SK-N-SH (cell line): ENCODE measurements at regions of chr17 and their contacts with region 1.

Region 1: GRCh38 chr17:46940621-46941404 is 17.9 kb downstream of the GOSR2 start:
- DNase-seq: peak; percentile 91
- H3K4me3 ChIP-seq: no peak overlapping the region
- H3K27ac ChIP-seq: peak overlapping the region; percentile 19 to 58; a peak in 2 of 4 replicates
- H3K4me1 ChIP-seq: peaks cover 14 to 20% of the 10 kb centered on the region in 2 experiments; a peak in 3 of 4 replicates
- H3K27me3 ChIP-seq: no peaks in the 10 kb centered on the region
- CTCF ChIP-seq: peak; percentile 95
- EP300 ChIP-seq: peak in 1 of 2 experiments; percentile 44; a peak in 2 of 4 replicates
- RAD21 ChIP-seq: peak; percentile 97

Region 2: GRCh38 chr17:46841561-46842379 is 99.0 kb before region 1 on chr17:
- CTCF ChIA-PET with region 1: interaction called, 210 read pairs
- POLR2A ChIA-PET with region 1: no interaction called
- DNase-seq: peak; percentile 96
- H3K4me3 ChIP-seq: peak overlapping the region; percentile 39 to 47
- H3K27ac ChIP-seq: no peak overlapping the region
- H3K4me1 ChIP-seq: peaks cover 0 to 3% of the 10 kb centered on the region in 2 experiments; a peak in 1 of 4 replicates
- H3K27me3 ChIP-seq: peaks cover 23% of the 10 kb centered on the region; the same call in 1 of the 2 replicates
- CTCF ChIP-seq: peak; percentile 79
- EP300 ChIP-seq: no peak
- RAD21 ChIP-seq: peak; percentile 72

Region 3: DNA sequence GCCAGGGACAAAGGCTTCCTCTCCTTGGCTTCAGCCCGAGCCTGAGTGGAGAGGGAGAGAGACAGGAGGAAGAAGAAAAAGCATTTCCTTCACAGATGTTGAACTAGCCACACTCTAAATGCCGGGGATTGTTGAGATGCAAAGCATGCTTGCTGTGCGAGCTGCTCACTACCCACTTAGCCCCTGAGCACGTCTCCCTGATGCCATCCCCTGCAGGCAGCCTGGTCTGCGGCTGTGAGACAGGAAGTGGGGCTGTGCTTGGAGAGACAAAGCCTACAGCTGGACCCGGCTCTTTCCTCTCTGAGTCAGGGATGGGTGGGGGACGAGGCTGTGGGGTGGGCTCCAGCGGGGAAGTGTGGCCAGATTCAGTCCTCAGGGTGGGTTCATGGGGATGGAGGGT is 75.7 kb before region 1 on chr17:
- CTCF ChIA-PET with region 1: interaction called, 21 read pairs
- POLR2A ChIA-PET with region 1: no interaction called
- DNase-seq: peak; percentile 51
- H3K4me3 ChIP-seq: no peak overlapping the region
- H3K27ac ChIP-seq: no peak overlapping the region
- H3K4me1 ChIP-seq: peaks cover 0 to 5% of the 10 kb centered on the region in 2 experiments; a peak in 1 of 4 replicates
- H3K27me3 ChIP-seq: 0 out of 2 replicates have a peak, but pooled peaks cover 2% of the 10 kb centered on the region
- CTCF ChIP-seq: no peak
- EP300 ChIP-seq: no peak
- RAD21 ChIP-seq: no peak

Region 4: GRCh38 chr17:46958041-46958591 is 17.3 kb after region 1 on chr17:
- CTCF ChIA-PET with region 1: interaction called, 56 read pairs
- POLR2A ChIA-PET with region 1: interaction called, 3 read pairs
- DNase-seq: no peak
- H3K4me3 ChIP-seq: no peak overlapping the region
- H3K27ac ChIP-seq: no peak overlapping the region
- H3K4me1 ChIP-seq: peaks cover 0 to 2% of the 10 kb centered on the region in 2 experiments; a peak in 1 of 4 replicates
- H3K27me3 ChIP-seq: no peaks in the 10 kb centered on the region
- CTCF ChIP-seq: no peak
- EP300 ChIP-seq: no peak
- RAD21 ChIP-seq: no peak

Region 5: DNA sequence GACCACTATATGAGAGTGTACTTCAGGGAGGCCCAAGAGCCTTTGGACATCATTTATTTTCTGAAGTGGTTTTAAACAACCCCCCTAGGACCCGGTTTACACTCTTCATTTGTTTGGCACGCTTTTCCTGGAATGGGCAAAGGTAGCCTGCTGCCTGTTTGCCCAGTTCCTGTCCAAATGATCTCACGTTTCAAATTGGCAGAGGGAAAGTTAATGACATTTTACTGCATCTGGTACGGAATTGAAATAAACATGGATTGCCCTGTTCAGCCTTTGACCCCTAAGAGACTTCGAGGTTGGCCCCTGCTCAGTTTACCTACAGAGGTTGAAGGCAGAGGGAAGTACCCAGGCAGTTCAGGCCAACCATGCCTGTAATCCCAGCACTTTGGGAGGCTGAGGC is 44.1 kb after region 1 on chr17:
- CTCF ChIA-PET with region 1: interaction called, 278 read pairs
- POLR2A ChIA-PET with region 1: no interaction called
- DNase-seq: no peak
- H3K4me3 ChIP-seq: no peak overlapping the region
- H3K27ac ChIP-seq: 0 out of 4 replicates have a peak overlapping the region, but pooled peaks of 1 of the 2 experiments have one; percentile 11
- H3K4me1 ChIP-seq: peaks cover 0 to 13% of the 10 kb centered on the region in 2 experiments; a peak in 1 of 4 replicates
- H3K27me3 ChIP-seq: no peaks in the 10 kb centered on the region; the same call in 1 of the 2 replicates
- CTCF ChIP-seq: no peak
- EP300 ChIP-seq: no peak
- RAD21 ChIP-seq: no peak

Region 6: GRCh38 chr17:47315451-47316266 is 374.8 kb after region 1 on chr17:
- CTCF ChIA-PET with region 1: interaction called, 16 read pairs
- POLR2A ChIA-PET with region 1: no interaction called
- DNase-seq: peak; percentile 80
- H3K4me3 ChIP-seq: no peak overlapping the region
- H3K27ac ChIP-seq: peak overlapping the region in 1 of 2 experiments; percentile 67; a peak in 2 of 4 replicates
- H3K4me1 ChIP-seq: peaks cover 1 to 18% of the 10 kb centered on the region in 2 experiments; a peak in 3 of 4 replicates
- H3K27me3 ChIP-seq: no peaks in the 10 kb centered on the region
- CTCF ChIP-seq: peak; percentile 99
- EP300 ChIP-seq: no peak
- RAD21 ChIP-seq: peak; percentile 100